HEK293 (cell line): ENCODE measurements at regions of chr9 and their contacts with region 1.

Region 1: DNA sequence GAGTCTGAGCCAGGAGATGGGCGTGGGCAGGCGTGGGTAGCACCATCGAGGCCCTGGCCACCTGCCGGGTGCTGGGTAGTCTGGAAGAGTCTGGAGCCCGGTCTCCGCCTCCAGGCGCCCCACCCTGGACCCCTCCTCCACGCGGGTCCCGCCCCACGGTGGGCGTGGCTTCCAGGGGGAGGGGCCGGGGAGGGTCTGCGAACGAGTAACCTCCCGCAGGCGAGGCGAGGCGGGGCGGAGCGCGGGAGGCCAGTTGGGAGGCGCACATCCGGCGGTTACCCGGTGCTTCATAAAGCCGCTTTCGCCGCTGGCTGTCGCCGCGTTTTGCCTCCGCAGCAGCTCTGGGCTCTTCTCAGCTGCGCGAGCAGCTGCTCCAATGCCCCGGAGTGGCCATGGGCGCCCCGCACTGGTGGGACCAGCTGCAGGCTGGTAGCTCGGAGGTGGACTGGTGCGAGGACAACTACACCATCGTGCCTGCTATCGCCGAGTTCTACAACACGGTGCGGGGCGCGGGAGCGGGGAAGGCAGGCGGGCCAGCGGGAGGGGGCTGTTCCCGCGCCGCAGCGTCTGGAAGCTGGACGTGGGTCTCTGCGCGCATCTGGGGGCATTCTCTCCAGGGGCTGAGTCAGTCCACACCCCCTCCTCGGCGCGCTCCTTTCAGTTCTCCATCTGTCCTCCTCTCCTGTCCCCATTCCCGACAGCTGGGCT is at the start of gene ACER2:
- H3K4me3 ChIP-seq: peak within 1 kb of the TSS; percentile 78
- H3K27ac ChIP-seq: peak within 1 kb of the TSS; percentile 66; the same call in 1 of the 2 replicates
- H3K4me1 ChIP-seq: no peaks in the 10 kb centered on the region; the same call in 1 of the 2 replicates
- CTCF ChIP-seq: peak; percentile 35

Region 2: DNA sequence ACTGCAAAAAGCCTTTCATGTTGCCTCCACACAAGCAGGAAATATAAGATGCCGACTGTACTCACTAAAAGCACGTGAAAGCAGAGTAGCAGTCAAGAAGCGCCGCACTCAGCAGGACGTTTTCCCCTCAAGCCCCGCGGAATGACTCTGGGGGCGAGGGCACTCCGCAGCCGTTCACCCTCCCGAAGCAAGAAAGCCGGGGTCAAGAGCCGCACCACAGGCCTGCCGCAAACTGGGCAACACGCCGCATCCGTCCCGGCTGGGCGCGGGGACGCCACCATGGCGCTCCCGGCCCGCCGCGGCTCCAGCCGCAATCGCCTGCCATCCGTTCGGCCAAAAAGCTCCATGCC is 29.2 kb before region 1 on chr9:
- CTCF ChIA-PET with region 1: no interaction called
- POLR2A ChIA-PET with region 1: interaction called, 14 read pairs
- H3K4me3 ChIP-seq: peak overlapping the region; percentile 74
- H3K27ac ChIP-seq: peak overlapping the region; percentile 99
- H3K4me1 ChIP-seq: no peaks in the 10 kb centered on the region
- CTCF ChIP-seq: no peak